ENCODE measurements at regions of chr14 and their contacts with region 1.

Region 1: DNA sequence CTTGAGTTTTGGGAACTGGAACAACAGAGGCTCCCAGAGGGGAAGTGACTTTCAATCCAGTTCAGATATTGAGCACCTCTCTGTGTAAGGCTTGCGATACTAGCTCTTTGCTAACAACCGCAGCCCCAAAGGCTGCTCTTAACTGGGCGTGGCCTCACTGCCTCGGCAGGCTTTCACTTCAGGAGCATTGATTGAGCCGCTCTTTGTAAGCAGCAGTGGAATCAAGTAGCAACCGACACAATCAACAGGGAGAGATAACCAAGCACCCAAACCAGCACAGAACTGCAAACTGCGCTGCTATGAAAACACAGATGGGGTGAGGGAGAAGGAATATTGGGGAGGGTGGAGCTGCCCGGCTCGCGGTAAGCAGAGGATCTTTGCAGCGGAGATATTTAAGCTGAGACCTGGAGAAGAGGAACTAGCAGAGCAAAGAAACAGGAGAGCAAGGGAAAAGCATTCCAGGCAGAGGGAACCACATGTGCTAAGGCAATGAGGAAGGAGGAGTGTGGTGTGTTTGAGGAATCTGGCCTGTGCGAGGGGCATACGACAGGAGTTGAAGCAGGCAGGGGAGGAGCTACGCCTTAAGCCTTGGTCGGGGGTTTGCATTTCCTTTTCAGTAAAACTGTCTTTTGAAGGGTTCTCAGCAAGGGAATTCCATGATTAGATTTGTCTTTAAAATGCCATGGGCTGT is 17.3 kb upstream of the YY1 start:
- DNase-seq: peak; percentile 67
- H3K4me3 Mint-ChIP-seq: no peak overlapping the region
- H3K27ac Mint-ChIP-seq: no peak overlapping the region
- H3K4me1 Mint-ChIP-seq: peaks cover 6% of the 10 kb centered on the region
- H3K27me3 Mint-ChIP-seq: no peaks in the 10 kb centered on the region

Region 2: GRCh38 chr14:100108042-100108825 is 113.4 kb before region 1 on chr14:
- intact Hi-C with region 1: no loop called
- DNase-seq: peak; percentile 74
- H3K4me3 Mint-ChIP-seq: peak overlapping the region; percentile 47
- H3K27ac Mint-ChIP-seq: peak overlapping the region; percentile 93
- H3K4me1 Mint-ChIP-seq: peaks cover 76% of the 10 kb centered on the region
- H3K27me3 Mint-ChIP-seq: no peaks in the 10 kb centered on the region

Region 3: DNA sequence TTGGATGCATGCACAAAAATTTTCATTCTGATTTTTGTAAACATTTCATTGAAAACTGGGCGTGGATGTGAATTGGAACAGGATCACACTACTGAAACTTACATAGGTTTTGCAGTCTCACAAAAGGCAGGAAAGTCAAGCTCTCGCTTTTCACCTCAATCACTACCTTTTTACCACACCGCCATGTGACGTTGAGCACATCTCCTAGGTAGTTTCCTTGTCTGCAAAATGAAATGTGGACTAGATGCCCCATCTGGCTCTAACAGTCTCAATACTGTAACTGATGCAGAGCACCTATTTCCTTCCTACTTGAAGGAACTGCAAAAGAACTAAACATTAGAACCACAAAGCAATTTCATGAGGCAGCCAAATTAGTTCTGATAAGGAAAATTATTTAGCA is 12.8 kb after region 1 on chr14:
- intact Hi-C with region 1: loop called (anchors 1 kb)
- DNase-seq: no peak
- H3K4me3 Mint-ChIP-seq: no peak overlapping the region
- H3K27ac Mint-ChIP-seq: peak overlapping the region; percentile 3
- H3K4me1 Mint-ChIP-seq: peaks cover 38% of the 10 kb centered on the region
- H3K27me3 Mint-ChIP-seq: no peaks in the 10 kb centered on the region

Region 4: DNA sequence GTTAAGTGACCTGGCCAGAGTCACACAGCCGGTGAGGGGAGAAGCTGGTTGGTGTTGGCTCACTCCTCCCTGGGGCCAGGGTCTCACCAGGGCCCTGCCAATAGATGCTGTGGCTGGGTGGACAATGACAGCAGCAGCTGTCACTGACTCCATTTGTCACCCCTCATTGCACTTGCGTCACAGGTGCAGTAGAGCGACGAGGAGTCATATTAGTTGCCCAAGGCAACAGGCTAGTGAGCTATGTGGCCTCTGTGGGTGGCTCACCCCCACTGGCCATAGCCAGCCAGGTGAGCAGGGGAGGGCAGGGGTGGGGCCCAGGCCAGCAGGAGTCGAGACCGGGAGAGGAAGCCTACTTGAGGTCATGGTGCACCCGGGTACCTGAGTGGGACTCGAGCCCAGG is 111.1 kb after region 1 on chr14:
- intact Hi-C with region 1: no loop called
- DNase-seq: no peak
- H3K4me3 Mint-ChIP-seq: no peak overlapping the region
- H3K27ac Mint-ChIP-seq: no peak overlapping the region
- H3K4me1 Mint-ChIP-seq: no peaks in the 10 kb centered on the region
- H3K27me3 Mint-ChIP-seq: no peaks in the 10 kb centered on the region